A549 (cell line): ENCODE measurements at regions of chr9 and their contacts with region 1.

Region 1: GRCh38 chr9:34252670-34253459 is 74.0 kb downstream of the UBAP1 start:
- DNase-seq: peak; percentile 67 to 71
- ATAC-seq: peak; percentile 59 to 76; a peak in 5 of 6 replicates
- H3K4me3 ChIP-seq: no peak overlapping the region
- H3K27ac ChIP-seq: peak overlapping the region; percentile 73 to 76
- H3K4me1 ChIP-seq: peaks cover 38% of the 10 kb centered on the region
- CTCF ChIP-seq: peak; percentile 93
- EP300 ChIP-seq: no peak
- POLR2A ChIP-seq: no peak
- RAD21 ChIP-seq: peak; percentile 61 to 69

Region 2: GRCh38 chr9:34079181-34079580 is 173.7 kb before region 1 on chr9:
- CTCF ChIA-PET with region 1: interaction called, 125 read pairs
- POLR2A ChIA-PET with region 1: interaction called, 4 read pairs
- DNase-seq: peak; percentile 62 to 73
- ATAC-seq: peak; percentile 53 to 80
- H3K4me3 ChIP-seq: no peak overlapping the region
- H3K27ac ChIP-seq: no peak overlapping the region
- H3K4me1 ChIP-seq: peaks cover 9% of the 10 kb centered on the region; the same call in 2 of the 3 replicates
- CTCF ChIP-seq: no peak
- EP300 ChIP-seq: no peak
- POLR2A ChIP-seq: no peak
- RAD21 ChIP-seq: no peak

Region 3: GRCh38 chr9:34119713-34120112 is 133.2 kb before region 1 on chr9:
- CTCF ChIA-PET with region 1: interaction called, 11 read pairs
- POLR2A ChIA-PET with region 1: no interaction called
- DNase-seq: no peak
- ATAC-seq: no peak
- H3K4me3 ChIP-seq: no peak overlapping the region
- H3K27ac ChIP-seq: no peak overlapping the region
- H3K4me1 ChIP-seq: peaks cover 14% of the 10 kb centered on the region
- CTCF ChIP-seq: no peak
- EP300 ChIP-seq: no peak
- POLR2A ChIP-seq: no peak
- RAD21 ChIP-seq: no peak

Region 4: GRCh38 chr9:34190996-34191892 is 61.6 kb before region 1 on chr9:
- CTCF ChIA-PET with region 1: interaction called, 22 read pairs
- POLR2A ChIA-PET with region 1: no interaction called
- DNase-seq: peak; percentile 30 to 71
- ATAC-seq: peak; percentile 56 to 72; a peak in 4 of 6 replicates
- H3K4me3 ChIP-seq: no peak overlapping the region
- H3K27ac ChIP-seq: peak overlapping the region; percentile 49 to 50; a peak in 5 of 6 replicates
- H3K4me1 ChIP-seq: peaks cover 44% of the 10 kb centered on the region
- CTCF ChIP-seq: peak; percentile 56
- EP300 ChIP-seq: no peak
- POLR2A ChIP-seq: no peak
- RAD21 ChIP-seq: peak; percentile 40 to 41; a peak in 4 of 5 replicates

Region 5: GRCh38 chr9:34271265-34272006 is 18.6 kb after region 1 on chr9:
- CTCF ChIA-PET with region 1: interaction called, 123 read pairs
- POLR2A ChIA-PET with region 1: no interaction called
- DNase-seq: no peak
- ATAC-seq: no peak
- H3K4me3 ChIP-seq: no peak overlapping the region
- H3K27ac ChIP-seq: no peak overlapping the region
- H3K4me1 ChIP-seq: no peaks in the 10 kb centered on the region
- CTCF ChIP-seq: no peak
- EP300 ChIP-seq: no peak
- POLR2A ChIP-seq: no peak
- RAD21 ChIP-seq: no peak

Region 6: DNA sequence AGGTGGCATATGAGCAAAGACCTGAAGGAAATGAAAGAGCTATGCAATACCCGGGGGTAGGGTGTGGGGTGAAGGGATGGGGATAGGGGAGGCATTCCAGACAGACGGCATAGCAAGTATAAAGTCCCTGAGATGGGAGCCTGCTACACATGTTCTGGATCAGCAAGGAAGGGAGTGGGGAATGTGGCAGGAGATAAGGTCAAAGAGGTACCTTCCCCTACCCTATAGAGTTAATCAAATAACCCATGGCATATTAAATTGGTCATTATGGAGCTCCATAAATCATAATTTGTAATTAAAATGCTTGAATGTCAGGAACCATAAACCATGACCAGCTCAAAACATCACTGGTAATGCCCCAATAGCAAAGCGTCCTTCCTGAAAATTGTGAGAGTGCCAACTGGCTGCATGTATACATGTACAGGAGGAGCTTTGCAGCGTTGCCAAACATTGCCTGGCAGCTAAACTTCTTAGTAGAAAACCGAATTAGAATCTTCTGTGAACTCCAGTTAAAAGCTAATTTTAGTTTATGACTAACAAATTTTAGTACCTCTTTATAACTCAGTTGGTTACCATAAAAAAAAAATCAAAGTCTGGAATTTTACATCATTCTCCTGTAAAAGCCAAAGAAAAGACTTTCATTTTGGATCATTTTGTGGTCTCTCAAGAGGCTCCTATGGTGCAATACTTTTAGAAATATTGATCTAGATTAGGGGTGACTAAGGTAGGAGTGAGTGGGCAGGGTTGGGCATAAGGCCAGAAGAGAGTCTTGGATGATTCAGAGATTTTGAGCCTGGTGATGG is 210.4 kb after region 1 on chr9:
- CTCF ChIA-PET with region 1: no interaction called
- POLR2A ChIA-PET with region 1: no interaction called
- DNase-seq: peak; percentile 11 to 18
- ATAC-seq: peak; percentile 51 to 54; a peak in 3 of 6 replicates
- H3K4me3 ChIP-seq: no peak overlapping the region
- H3K27ac ChIP-seq: no peak overlapping the region
- H3K4me1 ChIP-seq: peaks cover 13% of the 10 kb centered on the region; the same call in 2 of the 3 replicates
- CTCF ChIP-seq: no peak
- EP300 ChIP-seq: no peak
- POLR2A ChIP-seq: no peak
- RAD21 ChIP-seq: no peak